CD4-positive, alpha-beta T cell (primary cell): ENCODE measurements at regions of chr19 and their contacts with region 1.

Region 1: GRCh38 chr19:1929021-1929742 is 11.8 kb upstream of the CSNK1G2 start:
- DNase-seq: peak; percentile 64 to 89 (median 80)
- ATAC-seq: peak; percentile 85
- H3K4me3 ChIP-seq: peak overlapping the region; percentile 47
- H3K4me3 Mint-ChIP-seq: peak overlapping the region; percentile 82
- H3K27ac ChIP-seq: no peak overlapping the region
- H3K27ac Mint-ChIP-seq: peak overlapping the region; percentile 56
- H3K4me1 ChIP-seq: peaks cover 42% of the 10 kb centered on the region
- H3K4me1 Mint-ChIP-seq: peaks cover 27% of the 10 kb centered on the region
- H3K27me3 ChIP-seq: no peaks in the 10 kb centered on the region
- H3K27me3 Mint-ChIP-seq: no peaks in the 10 kb centered on the region
- CTCF ChIP-seq: peak; percentile 90

Region 2: GRCh38 chr19:1855040-1855827 is 73.9 kb before region 1 on chr19:
- CTCF ChIA-PET with region 1: no interaction called
- POLR2A ChIA-PET with region 1: no interaction called
- intact Hi-C with region 1: no loop called
- DNase-seq: peak; percentile 61 to 95 (median 82)
- ATAC-seq: peak; percentile 56
- H3K4me3 ChIP-seq: peak overlapping the region; percentile 61
- H3K4me3 Mint-ChIP-seq: peak overlapping the region; percentile 91
- H3K27ac ChIP-seq: peak overlapping the region; percentile 71 to 77
- H3K27ac Mint-ChIP-seq: peak overlapping the region; percentile 96
- H3K4me1 ChIP-seq: peaks cover 89% of the 10 kb centered on the region
- H3K4me1 Mint-ChIP-seq: peaks cover 64% of the 10 kb centered on the region
- H3K27me3 ChIP-seq: no peaks in the 10 kb centered on the region
- H3K27me3 Mint-ChIP-seq: no peaks in the 10 kb centered on the region
- CTCF ChIP-seq: no peak

Region 3: DNA sequence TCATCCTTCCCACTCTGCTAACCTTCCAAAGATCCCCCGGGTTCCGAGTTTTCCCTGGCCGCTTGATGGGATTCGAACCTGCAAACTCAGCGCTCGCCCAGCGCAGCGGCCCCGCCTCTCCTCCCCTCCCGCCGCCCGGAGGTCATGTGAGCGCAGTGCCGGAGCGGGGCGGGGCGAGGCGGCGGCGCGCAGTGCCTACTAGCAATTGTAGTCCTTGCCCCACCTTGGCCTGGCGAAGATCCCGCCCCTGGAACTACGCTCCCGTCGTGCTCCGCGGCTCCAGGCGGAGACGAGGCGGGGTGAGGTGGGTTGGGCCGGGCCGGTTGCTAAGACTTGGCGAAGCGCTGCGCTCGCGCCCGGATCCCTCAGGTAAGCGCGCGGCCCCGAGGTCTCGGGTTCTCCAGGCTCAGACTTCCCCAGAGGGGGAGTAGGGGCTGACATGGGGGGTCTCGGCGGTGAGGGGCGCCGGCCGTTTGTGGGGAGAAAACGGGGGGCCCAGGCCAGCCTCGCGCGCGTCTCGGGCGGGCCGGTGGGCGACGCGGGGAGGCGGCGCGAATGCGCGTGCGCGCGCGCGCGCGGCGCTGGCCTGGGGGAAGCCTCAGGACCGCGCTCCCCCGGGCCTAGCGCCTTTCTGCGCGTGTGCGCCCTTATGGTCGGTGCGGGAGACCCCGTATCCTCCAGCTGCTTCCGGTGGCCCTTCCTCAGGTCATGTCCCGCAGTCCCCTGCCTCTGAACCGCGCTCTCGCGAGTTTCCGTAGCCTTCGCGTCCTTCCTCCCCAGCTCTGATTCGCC is 23.9 kb before region 1 on chr19 and contains the starts of genes ADAT3 and SCAMP4:
- CTCF ChIA-PET with region 1: no interaction called
- POLR2A ChIA-PET with region 1: no interaction called
- intact Hi-C with region 1: loop called in 1 of 2 experiments (anchors 1 kb)
- DNase-seq: peak; percentile 97 to 99 (median 99)
- ATAC-seq: peak; percentile 98
- H3K4me3 ChIP-seq: peak within 1 kb of the TSS; percentile 65
- H3K4me3 Mint-ChIP-seq: peak within 1 kb of the TSS; percentile 93
- H3K27ac ChIP-seq: peak within 1 kb of the TSS; percentile 72
- H3K27ac Mint-ChIP-seq: peak within 1 kb of the TSS; percentile 78
- H3K4me1 ChIP-seq: peaks cover 51% of the 10 kb centered on the region
- H3K4me1 Mint-ChIP-seq: peaks cover 40% of the 10 kb centered on the region
- H3K27me3 ChIP-seq: no peaks in the 10 kb centered on the region
- H3K27me3 Mint-ChIP-seq: no peaks in the 10 kb centered on the region
- CTCF ChIP-seq: no peak
- total RNA-seq, gene ADAT3: 7.9 to 8.2 TPM
- total RNA-seq, gene SCAMP4: 12.7 to 15.4 TPM

Region 4: DNA sequence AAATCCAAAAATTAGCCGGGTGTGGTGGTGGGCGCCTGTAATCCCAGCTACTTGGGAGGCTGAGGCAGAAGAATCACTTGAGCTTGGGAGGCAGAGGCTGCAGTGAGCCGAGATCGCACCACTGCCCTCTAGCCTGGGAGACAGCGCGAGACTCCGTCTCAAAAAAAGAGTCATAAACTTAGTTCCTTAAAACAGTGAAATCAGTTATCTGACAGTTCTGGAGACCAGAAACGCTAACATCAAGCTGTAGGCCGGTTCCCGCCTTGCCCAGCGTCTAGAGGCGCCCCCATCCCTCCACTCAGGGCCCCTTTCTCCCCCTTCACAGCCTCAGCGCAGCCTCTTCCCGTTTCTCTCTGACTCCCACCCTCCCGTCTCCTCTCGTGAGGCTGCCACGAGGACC is 12.0 kb before region 1 on chr19:
- CTCF ChIA-PET with region 1: no interaction called
- POLR2A ChIA-PET with region 1: no interaction called
- intact Hi-C with region 1: no loop called
- DNase-seq: no peak
- ATAC-seq: no peak
- H3K4me3 ChIP-seq: no peak overlapping the region
- H3K4me3 Mint-ChIP-seq: no peak overlapping the region
- H3K27ac ChIP-seq: no peak overlapping the region
- H3K27ac Mint-ChIP-seq: no peak overlapping the region
- H3K4me1 ChIP-seq: peaks cover 5% of the 10 kb centered on the region
- H3K4me1 Mint-ChIP-seq: no peaks in the 10 kb centered on the region
- H3K27me3 ChIP-seq: no peaks in the 10 kb centered on the region
- H3K27me3 Mint-ChIP-seq: no peaks in the 10 kb centered on the region
- CTCF ChIP-seq: no peak

Region 5: GRCh38 chr19:1942078-1942933 is 13.1 kb after region 1 on chr19:
- CTCF ChIA-PET with region 1: interaction called, 11 read pairs
- POLR2A ChIA-PET with region 1: interaction called, 9 read pairs
- intact Hi-C with region 1: loop called in 1 of 2 experiments (anchors 2 kb)
- DNase-seq: peak; percentile 51 to 93 (median 76)
- ATAC-seq: peak; percentile 50
- H3K4me3 ChIP-seq: peak overlapping the region; percentile 97
- H3K4me3 Mint-ChIP-seq: peak overlapping the region; percentile 96
- H3K27ac ChIP-seq: peak overlapping the region; percentile 94 to 98
- H3K27ac Mint-ChIP-seq: peak overlapping the region; percentile 96
- H3K4me1 ChIP-seq: peaks cover 58% of the 10 kb centered on the region
- H3K4me1 Mint-ChIP-seq: peaks cover 27% of the 10 kb centered on the region
- H3K27me3 ChIP-seq: no peaks in the 10 kb centered on the region
- H3K27me3 Mint-ChIP-seq: peaks cover 5% of the 10 kb centered on the region
- CTCF ChIP-seq: no peak

Region 6: DNA sequence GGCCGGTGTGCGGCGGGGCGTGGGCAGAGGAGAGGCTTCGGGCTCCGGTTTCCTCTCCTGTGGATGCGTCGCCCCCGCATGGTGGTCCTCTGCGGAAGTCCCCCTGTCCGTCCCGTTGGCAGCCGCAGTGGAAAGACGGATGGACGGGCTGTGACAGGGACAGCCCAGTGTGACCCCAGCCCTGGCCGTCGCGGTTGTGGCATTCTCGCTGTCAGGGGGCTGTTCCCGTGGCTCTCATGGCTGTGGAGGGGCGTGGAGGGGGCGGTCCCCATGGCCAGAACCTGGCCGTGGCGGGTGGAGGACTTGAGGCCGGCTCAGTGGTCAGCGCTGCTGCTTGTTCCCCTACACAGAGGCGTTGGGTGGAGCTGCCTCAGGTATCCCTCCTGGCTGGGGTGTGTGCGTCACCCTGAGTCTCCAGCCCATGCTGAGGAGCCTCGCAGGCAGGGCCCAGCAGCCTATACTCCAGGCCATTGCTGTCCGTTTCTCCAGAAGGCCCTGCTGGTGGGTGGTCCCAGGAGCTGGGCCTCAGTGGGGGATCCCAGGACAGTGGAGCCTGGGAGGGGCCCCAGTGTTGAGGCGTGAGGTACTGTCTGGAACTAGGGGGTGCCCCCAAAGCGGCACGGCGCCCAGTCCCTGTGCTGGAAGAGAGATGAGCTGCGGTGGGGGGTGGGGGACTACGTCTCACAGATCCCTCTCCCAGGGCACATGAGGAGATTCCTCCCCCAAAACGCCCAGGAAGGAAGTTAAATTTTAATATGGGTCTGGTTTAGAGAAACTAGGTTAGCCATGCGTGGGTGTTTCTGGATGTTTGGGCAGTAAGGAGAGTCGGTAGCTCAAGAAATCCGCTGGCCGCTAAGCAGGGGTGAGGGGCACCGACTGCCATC is 32.1 kb after region 1 on chr19:
- CTCF ChIA-PET with region 1: no interaction called
- POLR2A ChIA-PET with region 1: no interaction called
- intact Hi-C with region 1: loop called in 1 of 2 experiments (anchors 5 kb)
- DNase-seq: no peak
- ATAC-seq: peak; percentile 13
- H3K4me3 ChIP-seq: no peak overlapping the region
- H3K4me3 Mint-ChIP-seq: no peak overlapping the region
- H3K27ac ChIP-seq: no peak overlapping the region
- H3K27ac Mint-ChIP-seq: peak overlapping the region; percentile 36
- H3K4me1 ChIP-seq: peaks cover 28% of the 10 kb centered on the region
- H3K4me1 Mint-ChIP-seq: peaks cover 25% of the 10 kb centered on the region
- H3K27me3 ChIP-seq: no peaks in the 10 kb centered on the region
- H3K27me3 Mint-ChIP-seq: no peaks in the 10 kb centered on the region
- CTCF ChIP-seq: no peak